CD4-positive, alpha-beta memory T cell (primary cell): ENCODE measurements at regions of chr12 and their contacts with region 1.

Region 1: GRCh38 chr12:113056631-113057488 is at the start of gene DTX1:
- DNase-seq: peak in 4 of 5 donors; percentile 35 to 56 (median 38)
- H3K4me3 ChIP-seq: peak within 1 kb of the TSS; percentile 30 to 49
- H3K4me3 Mint-ChIP-seq: peak within 1 kb of the TSS; percentile 81 to 88 (median 84)
- H3K27ac ChIP-seq: peak within 1 kb of the TSS; percentile 56
- H3K27ac Mint-ChIP-seq: peak within 1 kb of the TSS; percentile 53 to 85 (median 75)
- H3K4me1 ChIP-seq: peaks cover 54% of the 10 kb centered on the region
- H3K4me1 Mint-ChIP-seq: peaks cover 19 to 37% (median 32%) of the 10 kb centered on the region in 4 donors
- H3K27me3 ChIP-seq: no peaks in the 10 kb centered on the region
- H3K27me3 Mint-ChIP-seq: no peaks in the 10 kb centered on the region
- total RNA-seq, gene DTX1: 7.0 to 7.5 TPM

Region 2: GRCh38 chr12:113088971-113089756 is 32.3 kb after region 1 on chr12:
- CTCF ChIA-PET with region 1: interaction called, 4 read pairs
- POLR2A ChIA-PET with region 1: interaction called, 4 read pairs
- intact Hi-C with region 1: loop called (anchors 2 kb)
- DNase-seq: peak; percentile 40 to 55 (median 43)
- H3K4me3 ChIP-seq: peak overlapping the region in 1 of 2 donors; percentile 44
- H3K4me3 Mint-ChIP-seq: peak overlapping the region; percentile 63 to 84 (median 73)
- H3K27ac ChIP-seq: peak overlapping the region; percentile 54
- H3K27ac Mint-ChIP-seq: peak overlapping the region; percentile 93 to 96 (median 95)
- H3K4me1 ChIP-seq: peaks cover 81% of the 10 kb centered on the region
- H3K4me1 Mint-ChIP-seq: peaks cover 73 to 96% (median 84%) of the 10 kb centered on the region in 4 donors
- H3K27me3 ChIP-seq: no peaks in the 10 kb centered on the region
- H3K27me3 Mint-ChIP-seq: no peaks in the 10 kb centered on the region

Region 3: GRCh38 chr12:113098446-113098896 is 41.6 kb after region 1 on chr12:
- CTCF ChIA-PET with region 1: interaction called, 139 read pairs
- POLR2A ChIA-PET with region 1: no interaction called
- intact Hi-C with region 1: no loop called
- DNase-seq: peak; percentile 52 to 68 (median 60)
- H3K4me3 ChIP-seq: no peak overlapping the region
- H3K4me3 Mint-ChIP-seq: peak overlapping the region in 1 of 8 donors; percentile 4
- H3K27ac ChIP-seq: no peak overlapping the region
- H3K27ac Mint-ChIP-seq: peak overlapping the region in 4 of 7 donors; percentile 64 to 85 (median 75)
- H3K4me1 ChIP-seq: peaks cover 13% of the 10 kb centered on the region
- H3K4me1 Mint-ChIP-seq: peaks cover 14 to 41% (median 20%) of the 10 kb centered on the region in 4 donors
- H3K27me3 ChIP-seq: no peaks in the 10 kb centered on the region
- H3K27me3 Mint-ChIP-seq: peaks cover 0 to 1% of the 10 kb centered on the region in 2 donors